Ascending aorta (tissue), 2 donors: ENCODE measurements at regions of chr16 and their contacts with region 1.

Region 1: GRCh38 chr16:70589998-70590471 is 56.3 kb upstream of the IL34 start:
- DNase-seq: peak in 1 of 2 donors; percentile 69
- H3K4me3 ChIP-seq: no peak overlapping the region
- H3K27ac ChIP-seq: peak overlapping the region; percentile 89 to 92
- H3K4me1 ChIP-seq: peaks cover 16 to 49% of the 10 kb centered on the region in 2 donors
- H3K27me3 ChIP-seq: no peaks in the 10 kb centered on the region
- CTCF ChIP-seq: no peak

Region 2: GRCh38 chr16:70635336-70636016 is 45.4 kb after region 1 on chr16:
- intact Hi-C with region 1: loop called (anchors 2 kb)
- DNase-seq: peak in 1 of 2 donors; percentile 84
- H3K4me3 ChIP-seq: peak overlapping the region in 1 of 2 donors; percentile 5
- H3K27ac ChIP-seq: peak overlapping the region; percentile 77 to 85
- H3K4me1 ChIP-seq: peaks cover 0 to 21% of the 10 kb centered on the region in 2 donors
- H3K27me3 ChIP-seq: no peaks in the 10 kb centered on the region
- CTCF ChIP-seq: no peak

Region 3: DNA sequence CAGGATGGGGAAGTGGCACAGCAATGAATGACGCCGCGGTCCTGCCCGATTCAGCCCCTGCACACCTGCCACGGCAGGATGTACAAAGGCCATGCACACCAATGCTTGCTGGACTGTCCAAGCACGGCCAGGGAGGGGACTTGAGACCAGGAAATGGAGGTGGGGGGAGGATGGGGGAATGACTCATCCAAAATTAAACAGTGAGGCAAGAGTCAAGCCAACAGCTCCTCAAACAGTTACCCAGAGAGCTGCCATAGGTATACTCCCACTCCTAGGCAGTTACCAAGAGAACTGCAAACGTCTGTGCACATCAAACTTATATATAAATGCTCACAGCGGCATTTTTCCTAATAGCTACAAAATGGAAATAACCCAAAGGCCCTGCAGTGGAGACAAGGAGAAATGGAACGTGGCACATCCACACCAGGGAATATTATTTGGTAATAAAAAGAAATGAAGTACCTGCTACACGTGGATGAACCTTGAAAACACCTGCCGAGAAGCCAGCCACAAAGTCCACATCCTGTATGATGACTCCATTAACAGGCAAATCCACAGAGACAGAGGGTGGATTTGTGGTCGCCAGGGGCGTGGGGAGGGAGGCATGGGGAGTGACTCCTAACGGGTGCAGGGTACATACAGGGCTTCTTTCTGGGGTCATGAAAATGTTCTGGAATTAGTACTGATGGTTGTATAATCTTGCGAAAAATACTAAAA is 156.8 kb after region 1 on chr16:
- intact Hi-C with region 1: no loop called
- DNase-seq: peak; percentile 58 to 93
- H3K4me3 ChIP-seq: peak overlapping the region in 1 of 2 donors; percentile 2
- H3K27ac ChIP-seq: peak overlapping the region; percentile 91 to 92
- H3K4me1 ChIP-seq: peaks cover 13 to 49% of the 10 kb centered on the region in 2 donors
- H3K27me3 ChIP-seq: no peaks in the 10 kb centered on the region
- CTCF ChIP-seq: no peak